PC-9 (cell line): ENCODE measurements at regions of chr12 and their contacts with region 1.

Region 1: DNA sequence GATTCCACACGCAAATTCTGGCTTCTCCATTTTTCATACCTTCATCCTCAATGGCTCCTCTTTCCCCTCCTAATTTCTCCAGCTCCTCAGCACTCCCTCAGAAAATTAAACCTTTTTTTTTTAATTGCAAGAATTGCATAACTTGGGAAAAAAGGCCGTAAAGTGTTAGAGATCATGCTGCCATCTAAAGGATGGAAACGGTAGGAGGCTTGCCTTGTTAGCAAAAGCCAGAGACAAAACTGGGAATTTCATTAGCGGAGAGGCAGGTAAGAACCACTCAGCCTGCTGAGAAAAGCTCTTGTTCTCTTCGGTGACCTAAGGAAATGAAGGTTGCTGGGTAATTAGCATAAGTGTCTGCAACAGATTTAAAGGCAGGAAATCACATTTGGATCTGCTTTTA is 204.3 kb downstream of the AEBP2 start:
- DNase-seq: peak in 1 of 2 experiments; percentile 11
- H3K4me3 ChIP-seq: no peak overlapping the region
- H3K27ac ChIP-seq: no peak overlapping the region
- H3K4me1 ChIP-seq: no peaks in the 10 kb centered on the region
- H3K27me3 ChIP-seq: no peaks in the 10 kb centered on the region
- CTCF ChIP-seq: peak; percentile 57

Region 2: DNA sequence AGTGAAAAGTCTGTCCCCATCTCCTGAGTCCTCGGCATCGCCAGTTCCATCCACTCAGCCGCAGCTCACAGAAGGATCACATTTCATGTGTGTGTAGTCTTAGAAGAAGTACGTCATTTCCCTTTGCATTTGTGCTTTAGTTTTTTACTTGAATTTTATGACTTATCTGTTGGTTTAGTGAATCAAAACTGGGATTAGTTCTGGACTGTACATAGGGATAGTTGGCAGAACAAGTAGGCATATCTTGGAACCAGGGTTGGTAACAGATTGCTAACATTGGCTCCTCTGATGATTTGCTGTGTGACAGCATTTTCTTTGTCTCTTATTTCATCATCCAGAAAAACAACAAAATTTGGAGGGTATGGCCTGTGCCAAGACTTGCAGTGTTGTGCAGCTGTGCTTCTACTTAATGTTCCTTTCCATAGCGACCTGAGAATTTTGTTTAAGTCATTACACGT is 273.9 kb before region 1 on chr12:
- CTCF ChIA-PET with region 1: no interaction called
- POLR2A ChIA-PET with region 1: no interaction called
- intact Hi-C with region 1: loop called (anchors 10 kb)
- DNase-seq: no peak
- H3K4me3 ChIP-seq: no peak overlapping the region
- H3K27ac ChIP-seq: no peak overlapping the region
- H3K4me1 ChIP-seq: no peaks in the 10 kb centered on the region
- H3K27me3 ChIP-seq: no peaks in the 10 kb centered on the region
- CTCF ChIP-seq: no peak

Region 3: DNA sequence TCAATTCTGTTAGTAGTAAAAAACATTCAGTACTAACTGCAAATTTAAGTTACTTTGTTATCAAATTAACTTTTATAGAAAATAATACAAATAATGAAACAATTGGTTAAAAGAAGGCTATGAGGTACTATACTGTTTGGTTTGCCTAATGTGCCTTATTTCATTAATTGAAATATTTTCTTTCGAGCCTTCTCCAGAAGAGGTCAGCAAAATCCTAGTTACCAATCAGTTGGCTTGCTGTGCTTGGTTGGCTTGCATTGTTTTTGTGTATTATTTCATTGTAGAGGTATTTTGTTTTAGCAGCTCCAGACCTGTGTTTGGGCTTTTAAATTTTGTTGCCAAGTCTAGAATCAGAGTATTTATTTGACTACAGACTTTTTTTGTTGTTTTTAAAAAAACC is 135.8 kb before region 1 on chr12:
- CTCF ChIA-PET with region 1: no interaction called
- POLR2A ChIA-PET with region 1: no interaction called
- intact Hi-C with region 1: loop called (anchors 5 kb)
- DNase-seq: no peak
- H3K4me3 ChIP-seq: no peak overlapping the region
- H3K27ac ChIP-seq: no peak overlapping the region
- H3K4me1 ChIP-seq: no peaks in the 10 kb centered on the region
- H3K27me3 ChIP-seq: no peaks in the 10 kb centered on the region
- CTCF ChIP-seq: no peak

Region 4: GRCh38 chr12:19572920-19573558 is 70.6 kb before region 1 on chr12:
- CTCF ChIA-PET with region 1: no interaction called
- POLR2A ChIA-PET with region 1: no interaction called
- intact Hi-C with region 1: loop called (anchors 1 kb)
- DNase-seq: peak in 1 of 2 experiments; percentile 41
- H3K4me3 ChIP-seq: no peak overlapping the region
- H3K27ac ChIP-seq: no peak overlapping the region
- H3K4me1 ChIP-seq: no peaks in the 10 kb centered on the region
- H3K27me3 ChIP-seq: no peaks in the 10 kb centered on the region
- CTCF ChIP-seq: peak; percentile 68